ENCODE measurements at regions of chr16 and their contacts with region 1.

Region 1: GRCh38 chr16:75464130-75464918 is at the start of gene TMEM170A:
- DNase-seq: peak; percentile 99
- H3K4me3 Mint-ChIP-seq: peak within 1 kb of the TSS; percentile 85
- H3K27ac Mint-ChIP-seq: peak within 1 kb of the TSS; percentile 87
- H3K4me1 Mint-ChIP-seq: peaks cover 43% of the 10 kb centered on the region
- H3K27me3 Mint-ChIP-seq: no peaks in the 10 kb centered on the region
- total RNA-seq, gene TMEM170A: 24.3 to 25.6 TPM

Region 2: GRCh38 chr16:74650966-74651567 is 813.3 kb before region 1 on chr16:
- CTCF ChIA-PET with region 1: no interaction called
- POLR2A ChIA-PET with region 1: no interaction called
- intact Hi-C with region 1: no loop called
- DNase-seq: no peak
- H3K4me3 Mint-ChIP-seq: no peak overlapping the region
- H3K27ac Mint-ChIP-seq: no peak overlapping the region
- H3K4me1 Mint-ChIP-seq: peaks cover 30% of the 10 kb centered on the region
- H3K27me3 Mint-ChIP-seq: no peaks in the 10 kb centered on the region

Region 3: DNA sequence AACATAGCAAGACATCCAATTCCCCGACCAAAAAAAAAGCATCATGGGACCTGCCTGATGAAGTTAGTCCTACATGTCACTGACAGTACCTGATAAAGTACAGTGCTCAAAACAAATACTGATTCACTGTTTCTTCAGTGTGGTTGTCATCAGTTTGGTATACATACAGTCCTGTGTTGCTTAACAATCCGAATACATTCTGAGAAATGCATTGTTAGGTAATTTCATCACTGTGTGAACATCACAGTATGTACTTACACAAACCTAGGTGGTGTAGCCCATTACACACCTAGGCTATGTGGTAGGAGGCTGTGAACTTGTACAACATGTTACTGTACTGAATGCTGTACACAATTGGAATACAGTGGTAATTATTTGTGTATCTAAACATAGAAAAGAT is 670.8 kb before region 1 on chr16:
- CTCF ChIA-PET with region 1: no interaction called
- POLR2A ChIA-PET with region 1: no interaction called
- intact Hi-C with region 1: no loop called
- DNase-seq: no peak
- H3K4me3 Mint-ChIP-seq: no peak overlapping the region
- H3K27ac Mint-ChIP-seq: no peak overlapping the region
- H3K4me1 Mint-ChIP-seq: no peaks in the 10 kb centered on the region
- H3K27me3 Mint-ChIP-seq: peaks cover 26% of the 10 kb centered on the region

Region 4: GRCh38 chr16:75148311-75149195 is 315.8 kb before region 1 on chr16 and contains the start of gene ZFP1:
- CTCF ChIA-PET with region 1: no interaction called
- POLR2A ChIA-PET with region 1: no interaction called
- intact Hi-C with region 1: loop called (anchors 1 kb)
- DNase-seq: peak; percentile 96
- H3K4me3 Mint-ChIP-seq: peak within 1 kb of the TSS; percentile 87
- H3K27ac Mint-ChIP-seq: peak within 1 kb of the TSS; percentile 76
- H3K4me1 Mint-ChIP-seq: peaks cover 29% of the 10 kb centered on the region
- H3K27me3 Mint-ChIP-seq: no peaks in the 10 kb centered on the region
- total RNA-seq, gene ZFP1: 17.2 to 19.4 TPM

Region 5: GRCh38 chr16:75238132-75238852 is 226.0 kb before region 1 on chr16:
- CTCF ChIA-PET with region 1: interaction called, 3 read pairs
- POLR2A ChIA-PET with region 1: no interaction called
- intact Hi-C with region 1: loop called (anchors 10 kb)
- DNase-seq: no peak
- H3K4me3 Mint-ChIP-seq: no peak overlapping the region
- H3K27ac Mint-ChIP-seq: no peak overlapping the region
- H3K4me1 Mint-ChIP-seq: peaks cover 2% of the 10 kb centered on the region
- H3K27me3 Mint-ChIP-seq: no peaks in the 10 kb centered on the region

Region 6: DNA sequence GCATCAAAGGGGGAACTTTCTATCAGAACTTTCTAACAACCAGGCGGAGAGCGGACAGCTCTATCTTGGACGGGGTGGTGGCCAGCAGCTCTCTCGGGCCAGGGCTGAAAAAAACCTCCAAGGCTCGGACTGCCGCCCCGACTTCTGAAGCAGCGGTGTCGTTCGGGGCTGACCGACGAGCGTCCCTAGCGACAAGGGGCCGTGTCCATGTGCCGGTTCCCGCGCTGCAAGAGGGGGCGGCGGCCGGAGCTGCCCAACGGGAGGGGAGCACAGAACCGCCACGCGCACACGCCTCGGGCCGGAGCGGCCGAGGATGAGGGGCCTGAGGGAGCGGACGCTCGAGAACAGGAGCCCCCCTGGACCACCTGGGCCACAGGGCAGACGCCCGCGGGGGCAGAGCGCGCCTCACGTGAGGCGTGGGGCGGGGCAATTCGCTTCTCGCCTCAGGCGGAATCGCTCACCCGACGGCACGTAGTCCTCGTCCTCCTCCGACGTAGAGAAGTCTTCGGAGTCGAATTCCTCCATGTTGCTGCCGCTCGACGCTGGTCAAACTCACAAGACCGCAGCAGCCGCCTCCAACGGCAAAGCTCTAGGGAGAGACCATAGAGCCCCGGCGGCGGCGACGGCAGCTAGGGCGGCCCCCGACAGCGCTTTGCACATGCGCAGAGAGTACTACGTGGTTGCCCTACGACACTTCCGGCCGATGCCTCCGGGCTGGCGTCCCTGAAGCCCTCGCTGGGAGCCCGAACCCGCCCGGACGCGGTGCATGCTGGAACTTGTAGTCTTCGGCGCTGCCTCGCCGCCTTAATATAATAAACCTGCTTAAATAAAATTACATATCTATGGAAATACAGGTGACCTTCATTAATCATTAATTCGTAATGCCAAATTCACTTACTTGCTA is 31.2 kb before region 1 on chr16 and contains the start of gene CFDP1:
- CTCF ChIA-PET with region 1: interaction called, 16 read pairs
- POLR2A ChIA-PET with region 1: interaction called, 6 read pairs
- intact Hi-C with region 1: loop called (anchors 1 kb)
- DNase-seq: peak; percentile 96
- H3K4me3 Mint-ChIP-seq: peak within 1 kb of the TSS; percentile 90
- H3K27ac Mint-ChIP-seq: peak within 1 kb of the TSS; percentile 87
- H3K4me1 Mint-ChIP-seq: peaks cover 32% of the 10 kb centered on the region
- H3K27me3 Mint-ChIP-seq: no peaks in the 10 kb centered on the region
- total RNA-seq, gene CFDP1: 37.6 to 41.3 TPM

Region 7: GRCh38 chr16:75555707-75556430 is 91.5 kb after region 1 on chr16 and contains the start of gene TMEM231:
- CTCF ChIA-PET with region 1: interaction called, 6 read pairs
- POLR2A ChIA-PET with region 1: interaction called, 4 read pairs
- intact Hi-C with region 1: loop called (anchors 1 kb)
- DNase-seq: peak; percentile 98
- H3K4me3 Mint-ChIP-seq: peak within 1 kb of the TSS; percentile 88
- H3K27ac Mint-ChIP-seq: peak within 1 kb of the TSS; percentile 85
- H3K4me1 Mint-ChIP-seq: peaks cover 3% of the 10 kb centered on the region
- H3K27me3 Mint-ChIP-seq: peaks cover 4% of the 10 kb centered on the region
- total RNA-seq, gene TMEM231: 4.6 to 5.3 TPM

Region 8: DNA sequence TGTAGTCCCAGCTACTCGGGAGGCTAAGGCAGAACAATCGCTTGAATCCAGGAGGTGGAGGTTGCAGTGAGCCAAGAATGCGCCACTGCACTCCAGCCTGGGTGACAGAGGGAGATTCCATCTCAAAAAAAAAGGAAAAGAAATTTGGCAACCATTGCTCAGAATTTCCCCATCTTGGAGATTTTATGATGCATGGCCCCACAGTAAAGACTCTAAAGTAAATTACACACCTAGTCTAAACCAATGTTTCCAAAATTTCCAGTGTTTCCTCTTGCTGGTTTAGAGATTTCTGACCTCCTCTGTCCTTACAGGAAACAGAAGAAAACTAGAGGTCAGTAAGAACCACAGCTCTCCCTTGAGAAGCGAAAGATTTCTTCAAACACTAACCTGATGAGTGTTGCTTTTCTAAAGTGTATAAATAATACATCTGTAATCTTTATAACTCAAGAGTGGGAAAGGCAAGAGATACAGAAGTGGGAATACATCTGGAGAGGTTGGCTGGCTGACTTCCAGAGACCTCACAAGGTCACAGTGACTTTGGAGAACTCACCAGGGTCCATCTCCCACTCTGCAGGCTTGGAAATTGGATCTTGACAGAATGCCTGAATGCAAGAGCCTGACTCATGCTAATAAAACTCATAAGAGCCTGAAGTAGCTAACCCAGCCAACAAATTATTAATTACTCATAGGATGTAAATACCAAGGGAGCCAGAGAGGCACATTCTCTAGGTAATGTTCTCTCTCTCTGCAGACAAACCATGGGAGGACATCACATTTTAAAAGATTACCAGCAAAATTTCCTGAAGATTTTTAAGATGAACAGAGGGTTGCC is 150.0 kb after region 1 on chr16:
- CTCF ChIA-PET with region 1: interaction called, 5 read pairs
- POLR2A ChIA-PET with region 1: no interaction called
- intact Hi-C with region 1: loop called (anchors 1 kb)
- DNase-seq: no peak
- H3K4me3 Mint-ChIP-seq: no peak overlapping the region
- H3K27ac Mint-ChIP-seq: no peak overlapping the region
- H3K4me1 Mint-ChIP-seq: peaks cover 33% of the 10 kb centered on the region
- H3K27me3 Mint-ChIP-seq: no peaks in the 10 kb centered on the region

Region 9: DNA sequence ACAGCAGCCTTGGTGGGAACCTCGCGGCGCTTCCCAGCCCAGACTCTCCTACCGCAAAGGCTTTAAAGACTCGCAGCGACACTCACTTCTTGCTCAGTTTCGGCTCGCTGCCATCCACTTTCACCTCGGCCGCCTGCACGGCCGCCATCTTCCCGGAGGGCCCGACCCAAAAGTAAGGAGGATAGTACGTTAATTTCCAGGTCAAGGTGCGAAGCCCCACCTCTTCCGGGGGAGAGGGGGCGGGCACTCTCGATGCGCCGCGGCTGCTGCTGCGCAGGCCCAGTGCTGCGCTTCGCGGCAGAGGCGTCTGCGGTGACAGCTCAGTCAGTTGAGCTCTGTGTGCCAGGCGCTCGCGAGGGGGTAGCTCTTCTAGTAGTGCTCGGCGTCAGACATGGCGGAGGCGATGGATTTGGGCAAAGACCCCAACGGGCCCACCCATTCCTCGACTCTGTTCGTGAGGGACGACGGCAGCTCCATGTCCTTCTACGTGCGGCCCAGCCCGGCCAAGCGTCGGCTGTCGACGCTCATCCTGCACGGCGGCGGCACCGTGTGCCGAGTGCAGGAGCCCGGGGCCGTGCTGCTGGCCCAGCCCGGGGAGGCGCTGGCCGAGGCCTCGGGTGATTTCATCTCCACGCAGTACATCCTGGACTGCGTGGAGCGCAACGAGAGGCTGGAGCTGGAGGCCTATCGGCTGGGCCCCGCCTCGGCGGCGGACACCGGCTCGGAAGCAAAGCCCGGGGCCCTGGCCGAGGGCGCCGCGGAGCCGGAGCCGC is 183.4 kb after region 1 on chr16 and contains the starts of genes KARS1 and TERF2IP:
- CTCF ChIA-PET with region 1: interaction called, 9 read pairs
- POLR2A ChIA-PET with region 1: interaction called, 9 read pairs
- intact Hi-C with region 1: loop called (anchors 1 kb)
- DNase-seq: peak; percentile 97
- H3K4me3 Mint-ChIP-seq: peak within 1 kb of the TSS; percentile 94
- H3K27ac Mint-ChIP-seq: peak within 1 kb of the TSS; percentile 98
- H3K4me1 Mint-ChIP-seq: peaks cover 54% of the 10 kb centered on the region
- H3K27me3 Mint-ChIP-seq: no peaks in the 10 kb centered on the region
- total RNA-seq, gene KARS1: 273 to 277 TPM
- total RNA-seq, gene TERF2IP: 80.3 to 85.1 TPM

Region 10: DNA sequence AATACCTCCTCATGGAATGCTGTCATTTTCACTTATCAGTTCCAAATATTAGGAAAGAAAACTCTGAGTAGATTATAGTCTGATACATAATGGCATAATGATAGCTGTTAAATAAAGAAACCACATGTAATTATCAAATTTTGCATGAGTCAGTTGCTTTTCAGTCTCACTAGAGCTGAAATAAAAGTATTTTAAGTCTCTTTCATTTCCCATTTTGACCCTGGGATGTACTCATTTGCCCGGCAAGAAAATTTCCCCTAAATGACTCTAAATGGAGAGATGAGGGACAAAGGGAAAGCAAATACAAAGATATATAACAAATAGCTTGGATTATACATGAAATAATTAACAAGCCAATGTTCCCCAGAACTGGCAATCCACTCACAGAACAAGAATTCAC is 309.9 kb after region 1 on chr16:
- CTCF ChIA-PET with region 1: no interaction called
- POLR2A ChIA-PET with region 1: no interaction called
- intact Hi-C with region 1: no loop called
- DNase-seq: no peak
- H3K4me3 Mint-ChIP-seq: no peak overlapping the region
- H3K27ac Mint-ChIP-seq: no peak overlapping the region
- H3K4me1 Mint-ChIP-seq: no peaks in the 10 kb centered on the region
- H3K27me3 Mint-ChIP-seq: peaks cover 34% of the 10 kb centered on the region

Measured in activated CD4-positive, alpha-beta memory T cell treated with anti-CD3 and anti-CD28 coated beads for 36 hours (primary cell).